Astrocyte of the cerebellum (primary cell): ENCODE measurements at regions of chr6 and their contacts with region 1.

Region 1: DNA sequence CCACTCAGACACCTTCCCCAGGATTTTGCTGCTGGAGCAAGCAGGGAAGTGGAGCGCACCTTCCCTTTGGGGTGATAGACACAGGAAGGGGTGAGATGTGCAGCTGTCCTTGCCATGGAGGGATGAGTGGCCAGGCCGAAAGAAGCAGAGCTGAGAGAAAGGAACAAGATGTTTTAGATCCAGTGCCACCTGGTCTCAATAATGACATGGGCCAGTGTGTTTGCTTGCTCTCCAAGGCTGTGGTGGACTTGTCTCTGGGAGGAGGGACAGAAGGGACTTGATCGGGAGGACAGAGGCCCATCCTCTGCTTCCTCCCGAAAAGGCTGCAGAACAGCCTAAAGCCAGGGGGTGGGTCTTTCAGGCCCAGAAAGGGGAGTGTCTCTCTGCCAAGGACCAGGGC is 61.7 kb upstream of the CCDC167 start:
- DNase-seq: no peak
- H3K4me3 ChIP-seq: no peak overlapping the region
- CTCF ChIP-seq: no peak

Region 2: DNA sequence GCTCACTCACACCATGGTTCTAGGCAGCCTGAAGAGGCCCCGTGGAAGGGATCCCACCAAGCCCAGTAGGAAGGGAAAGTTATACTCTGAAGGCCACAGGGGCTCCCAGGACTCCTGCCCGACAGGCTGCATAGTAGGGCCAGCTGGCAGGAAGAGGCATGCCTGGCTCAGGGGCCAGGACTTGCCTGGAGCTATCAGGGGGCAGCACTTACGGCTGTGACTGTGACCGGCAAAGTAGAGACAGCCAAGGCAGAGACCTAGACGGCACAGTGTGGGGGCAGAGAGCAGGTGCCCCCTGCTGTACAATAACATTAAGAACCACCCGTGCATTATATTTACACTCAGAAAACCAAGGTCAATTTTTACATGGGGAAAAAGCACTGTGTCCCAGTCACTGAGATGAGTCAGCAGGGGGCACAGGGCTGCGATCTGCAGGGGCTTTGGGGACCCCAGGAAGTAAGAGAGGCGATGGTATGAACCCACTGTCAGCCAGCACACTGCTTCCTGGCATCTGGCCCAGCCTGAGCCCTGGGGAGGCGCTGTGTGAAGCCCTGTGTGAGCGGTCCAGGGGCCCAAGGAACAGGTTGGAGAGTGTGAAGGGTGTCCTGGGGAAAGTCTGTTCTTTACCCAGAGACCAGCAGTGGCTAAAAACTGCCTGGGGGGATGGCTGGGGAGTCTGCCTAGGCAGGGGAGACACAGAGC is 71.5 kb before region 1 on chr6:
- in situ Hi-C with region 1: loop called (anchors 5 kb)
- DNase-seq: no peak
- H3K4me3 ChIP-seq: no peak overlapping the region
- CTCF ChIP-seq: peak; percentile 26

Region 3: DNA sequence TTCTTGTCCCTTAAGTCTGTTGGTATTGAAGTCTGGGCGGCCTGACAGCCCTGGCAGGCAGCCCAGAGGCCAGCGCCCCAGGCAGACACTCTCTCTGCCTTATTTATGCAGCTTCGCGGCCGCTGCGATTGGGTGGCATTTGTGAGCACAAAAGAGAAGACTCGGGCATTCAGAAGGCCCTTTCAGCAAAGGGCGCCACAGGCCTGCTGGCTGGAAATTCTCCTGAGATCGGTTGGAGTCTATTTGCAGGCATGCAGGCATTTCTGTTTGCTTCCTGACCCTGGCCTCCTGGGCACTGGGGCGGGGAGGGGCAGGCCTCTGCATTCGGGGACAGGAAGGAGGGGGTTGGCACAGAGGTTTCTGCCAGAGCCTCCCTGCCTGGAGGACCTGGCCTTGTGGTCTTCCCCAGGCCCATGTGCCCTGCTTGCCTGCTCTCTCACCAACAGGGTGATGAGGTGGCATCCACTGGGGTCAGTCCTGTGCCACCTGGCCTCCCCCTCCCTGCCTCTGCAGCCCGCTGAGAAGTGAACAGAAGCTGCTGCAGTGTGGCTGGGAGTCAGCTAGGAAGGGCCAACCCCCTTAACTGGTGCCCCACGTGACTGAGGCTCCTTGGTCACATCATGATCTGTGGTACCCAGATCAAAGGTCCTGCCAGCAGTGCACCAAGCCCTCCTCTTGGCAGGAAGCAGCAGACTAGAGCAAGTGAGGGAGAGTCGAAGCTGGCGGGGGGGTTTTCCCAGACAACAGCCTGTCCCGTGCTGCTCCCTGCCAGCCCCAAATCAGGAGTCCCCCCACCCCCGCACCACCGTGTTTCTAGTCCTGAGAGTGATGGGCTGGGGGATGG is 45.1 kb before region 1 on chr6:
- in situ Hi-C with region 1: no loop called
- DNase-seq: no peak
- H3K4me3 ChIP-seq: no peak overlapping the region
- CTCF ChIP-seq: no peak

Region 4: GRCh38 chr6:37643851-37644672 is 82.7 kb after region 1 on chr6:
- in situ Hi-C with region 1: no loop called
- DNase-seq: no peak
- H3K4me3 ChIP-seq: no peak overlapping the region
- CTCF ChIP-seq: no peak

Region 5: DNA sequence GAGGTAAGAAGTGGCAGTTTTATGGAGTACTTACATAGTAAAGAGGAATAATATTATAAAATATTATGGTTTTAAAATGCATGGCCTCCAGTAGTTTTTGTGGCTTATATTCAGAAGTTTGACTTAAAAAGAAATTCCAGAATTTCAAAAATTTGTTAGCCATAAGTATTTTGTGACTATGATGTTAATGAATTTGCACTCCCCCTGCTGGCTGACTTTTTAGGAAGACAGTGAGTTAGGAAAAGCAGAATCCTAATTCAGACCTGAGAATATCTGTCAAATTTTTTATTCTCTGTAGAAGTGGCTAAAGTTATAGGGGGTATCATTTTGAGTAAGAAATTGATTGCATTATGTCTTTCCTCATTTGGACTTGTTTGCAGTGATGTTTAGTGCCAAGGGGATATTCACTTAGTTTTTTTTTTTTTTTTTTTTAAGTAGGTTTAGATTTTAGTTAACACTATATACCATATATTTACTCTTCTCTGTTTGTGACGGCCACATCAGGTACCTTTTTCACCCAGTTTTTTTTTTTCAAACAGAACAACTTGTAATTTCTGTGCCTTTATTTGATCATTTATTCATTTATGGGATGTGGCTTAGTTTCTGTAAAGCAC is 299.0 kb after region 1 on chr6:
- in situ Hi-C with region 1: no loop called
- DNase-seq: peak; percentile 49
- H3K4me3 ChIP-seq: no peak overlapping the region
- CTCF ChIP-seq: peak; percentile 63